Activated CD4-positive, alpha-beta T cell treated with anti-CD3 and anti-CD28 coated beads, Interleukin-2, amount 10 ng/mL, durations not matched to agents 7 days and 5 days (primary cell): ENCODE measurements at regions of chr1 and their contacts with region 1.

Region 1: DNA sequence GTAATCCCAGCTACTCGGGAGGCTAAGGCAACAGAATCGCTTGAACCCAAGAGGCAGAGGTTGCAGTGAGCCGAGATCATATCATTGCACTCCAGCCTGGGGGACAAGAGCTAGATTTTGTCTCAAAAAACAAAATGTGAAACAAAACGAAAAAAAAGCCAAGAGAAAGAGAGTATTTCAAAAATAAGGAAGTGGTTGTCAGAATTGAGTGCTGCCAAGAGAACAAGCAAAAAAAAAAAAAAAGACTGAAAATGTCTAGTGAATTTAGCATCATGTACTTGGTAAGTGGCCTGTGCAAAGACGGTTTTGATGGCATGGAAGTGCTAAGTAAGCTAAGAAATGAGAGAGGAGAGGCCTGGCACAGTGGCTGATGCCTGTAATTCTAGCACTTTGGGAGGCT is 14.3 kb downstream of the KPNA6 start:
- DNase-seq: no peak
- H3K4me3 Mint-ChIP-seq: no peak overlapping the region
- H3K27ac Mint-ChIP-seq: peak overlapping the region; percentile 84
- H3K4me1 Mint-ChIP-seq: peaks cover 38% of the 10 kb centered on the region
- H3K27me3 Mint-ChIP-seq: no peaks in the 10 kb centered on the region

Region 2: GRCh38 chr1:32107742-32108661 is 14.1 kb before region 1 on chr1 and contains the start of gene KPNA6:
- CTCF ChIA-PET with region 1: interaction called, 13 read pairs
- POLR2A ChIA-PET with region 1: interaction called, 4 read pairs
- DNase-seq: peak; percentile 95
- H3K4me3 Mint-ChIP-seq: peak within 1 kb of the TSS; percentile 97
- H3K27ac Mint-ChIP-seq: peak within 1 kb of the TSS; percentile 98
- H3K4me1 Mint-ChIP-seq: peaks cover 36% of the 10 kb centered on the region
- H3K27me3 Mint-ChIP-seq: no peaks in the 10 kb centered on the region
- total RNA-seq, gene KPNA6: 64.8 to 64.9 TPM